A673 (cell line): ENCODE measurements at regions of chr3 and their contacts with region 1.

Region 1: DNA sequence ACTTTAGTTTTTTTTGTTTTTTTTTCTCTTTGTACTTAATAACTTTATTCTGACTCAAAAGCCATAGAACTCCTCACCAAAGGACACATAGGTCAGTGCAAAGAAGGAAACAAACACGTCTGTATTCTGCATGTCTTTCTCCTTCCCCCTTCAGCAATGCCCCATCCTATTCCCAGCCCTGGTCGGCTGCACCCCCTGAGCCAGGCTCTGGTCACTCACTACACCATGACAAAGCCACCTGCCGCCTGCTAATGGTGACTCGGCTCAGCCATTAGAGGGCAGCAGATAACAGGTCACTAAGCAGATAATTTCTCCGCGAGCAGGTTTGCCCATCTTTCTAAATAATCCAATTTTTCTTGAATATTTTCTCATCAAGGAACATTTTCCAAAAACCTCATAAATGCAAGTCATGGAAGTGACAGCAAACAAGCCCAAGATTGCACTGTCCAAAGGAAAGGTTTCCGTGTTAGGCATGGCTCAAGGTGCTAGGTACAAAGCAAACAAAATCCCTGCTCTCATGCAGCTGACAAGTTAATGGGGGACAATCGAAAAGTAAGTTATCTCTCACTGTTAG is 37.8 kb downstream of the TM4SF4 start:
- DNase-seq: peak; percentile 70
- H3K4me3 ChIP-seq: no peak overlapping the region
- H3K27ac ChIP-seq: no peak overlapping the region
- H3K4me1 ChIP-seq: peaks cover 6% of the 10 kb centered on the region
- H3K27me3 ChIP-seq: no peaks in the 10 kb centered on the region
- CTCF ChIP-seq: peak; percentile 90

Region 2: GRCh38 chr3:149216193-149216869 is 296.0 kb before region 1 on chr3:
- CTCF ChIA-PET with region 1: no interaction called
- POLR2A ChIA-PET with region 1: no interaction called
- intact Hi-C with region 1: no loop called
- DNase-seq: no peak
- H3K4me3 ChIP-seq: no peak overlapping the region
- H3K27ac ChIP-seq: no peak overlapping the region
- H3K4me1 ChIP-seq: no peaks in the 10 kb centered on the region
- H3K27me3 ChIP-seq: no peaks in the 10 kb centered on the region
- CTCF ChIP-seq: no peak

Region 3: DNA sequence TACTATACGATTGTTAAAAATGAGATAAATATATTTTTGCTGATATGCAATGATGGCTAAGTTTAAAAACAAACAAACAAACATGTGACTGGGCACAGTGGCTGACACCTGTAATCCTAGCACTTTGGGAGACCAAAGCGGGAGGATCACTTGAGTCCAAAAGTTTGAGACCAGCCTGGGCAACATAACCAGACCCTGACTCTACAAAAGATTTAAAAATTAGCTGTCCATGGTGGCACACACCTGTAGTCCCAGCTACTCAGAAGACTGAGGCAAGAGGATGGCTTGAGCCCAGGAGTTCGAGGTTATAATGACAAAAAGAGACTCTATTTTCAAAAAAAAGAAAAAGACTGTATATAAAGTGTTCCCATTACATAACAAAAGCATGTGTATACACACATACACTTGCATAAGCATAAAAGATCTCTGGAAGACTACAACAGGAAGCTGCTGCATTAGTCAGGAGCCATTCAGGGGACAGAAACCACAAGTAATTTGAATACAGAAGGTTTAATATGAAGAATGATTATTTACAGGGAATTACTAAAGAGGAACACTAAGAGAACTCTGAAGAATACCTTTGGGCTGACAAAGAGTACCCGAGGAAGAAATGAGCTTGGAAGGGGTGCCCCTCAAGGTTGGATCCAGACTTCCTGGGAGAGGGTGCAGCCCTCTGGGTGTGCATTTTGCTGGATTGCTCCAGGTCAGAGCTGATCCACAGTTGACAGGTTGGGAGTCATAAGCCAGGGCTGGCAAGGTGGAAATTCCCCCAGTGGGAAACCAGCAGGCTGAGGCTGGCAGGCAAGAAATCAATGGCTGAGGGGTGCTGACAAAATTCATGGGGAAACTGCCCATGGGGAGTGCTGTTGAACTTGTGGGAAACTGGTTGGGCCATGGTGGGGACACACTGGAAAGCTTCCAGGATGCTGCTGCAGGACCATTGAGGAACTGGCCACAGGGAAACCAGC is 169.6 kb before region 1 on chr3:
- CTCF ChIA-PET with region 1: no interaction called
- POLR2A ChIA-PET with region 1: no interaction called
- intact Hi-C with region 1: no loop called
- DNase-seq: peak; percentile 43
- H3K4me3 ChIP-seq: no peak overlapping the region
- H3K27ac ChIP-seq: no peak overlapping the region
- H3K4me1 ChIP-seq: peaks cover 8% of the 10 kb centered on the region
- H3K27me3 ChIP-seq: no peaks in the 10 kb centered on the region
- CTCF ChIP-seq: no peak

Region 4: GRCh38 chr3:149494022-149494758 is 18.1 kb before region 1 on chr3:
- CTCF ChIA-PET with region 1: no interaction called
- POLR2A ChIA-PET with region 1: no interaction called
- intact Hi-C with region 1: no loop called
- DNase-seq: peak; percentile 82
- H3K4me3 ChIP-seq: no peak overlapping the region
- H3K27ac ChIP-seq: no peak overlapping the region
- H3K4me1 ChIP-seq: no peaks in the 10 kb centered on the region
- H3K27me3 ChIP-seq: peaks cover 4% of the 10 kb centered on the region
- CTCF ChIP-seq: peak; percentile 92

Region 5: GRCh38 chr3:149717391-149718056 is 205.2 kb after region 1 on chr3:
- CTCF ChIA-PET with region 1: no interaction called
- POLR2A ChIA-PET with region 1: no interaction called
- intact Hi-C with region 1: loop called (anchors 1 kb)
- DNase-seq: peak; percentile 84
- H3K4me3 ChIP-seq: no peak overlapping the region
- H3K27ac ChIP-seq: no peak overlapping the region
- H3K4me1 ChIP-seq: peaks cover 6% of the 10 kb centered on the region
- H3K27me3 ChIP-seq: no peaks in the 10 kb centered on the region
- CTCF ChIP-seq: peak; percentile 85

Region 6: DNA sequence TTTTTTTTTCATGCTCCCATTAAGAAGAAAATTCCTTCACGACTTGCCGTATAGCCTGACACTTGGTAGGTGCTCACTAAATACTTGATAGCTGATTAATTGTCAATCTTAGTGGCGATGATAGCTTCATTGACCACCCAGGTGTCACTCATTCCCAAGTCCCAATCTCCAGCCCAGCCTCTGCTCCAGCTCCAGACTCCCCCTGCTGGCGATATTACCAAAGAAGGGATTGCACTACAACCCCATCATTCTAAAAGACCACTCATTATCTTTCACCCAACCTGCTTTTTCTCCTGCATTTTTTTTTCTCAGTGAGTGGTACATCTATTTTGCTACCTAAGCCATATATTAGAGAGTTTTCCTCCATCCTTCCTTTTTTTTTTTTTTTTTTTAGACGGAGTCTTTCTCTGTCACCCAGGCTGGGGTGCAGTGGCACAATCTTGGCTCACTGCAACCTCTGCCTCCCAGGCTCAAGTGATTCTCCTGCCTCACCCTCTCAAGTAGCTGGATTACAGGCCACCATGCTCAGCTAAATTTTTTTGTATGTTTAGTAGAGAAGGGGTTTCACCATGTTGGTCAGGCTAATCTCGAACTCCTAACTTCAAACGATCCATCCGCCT is 259.5 kb after region 1 on chr3:
- CTCF ChIA-PET with region 1: interaction called, 3 read pairs
- POLR2A ChIA-PET with region 1: no interaction called
- intact Hi-C with region 1: loop called (anchors 1 kb)
- DNase-seq: peak; percentile 63
- H3K4me3 ChIP-seq: no peak overlapping the region
- H3K27ac ChIP-seq: no peak overlapping the region
- H3K4me1 ChIP-seq: no peaks in the 10 kb centered on the region
- H3K27me3 ChIP-seq: no peaks in the 10 kb centered on the region
- CTCF ChIP-seq: peak; percentile 90

Region 7: GRCh38 chr3:149783576-149783975 is 271.3 kb after region 1 on chr3:
- CTCF ChIA-PET with region 1: no interaction called
- POLR2A ChIA-PET with region 1: interaction called, 10 read pairs
- intact Hi-C with region 1: no loop called
- DNase-seq: no peak
- H3K4me3 ChIP-seq: no peak overlapping the region
- H3K27ac ChIP-seq: no peak overlapping the region
- H3K4me1 ChIP-seq: no peaks in the 10 kb centered on the region
- H3K27me3 ChIP-seq: no peaks in the 10 kb centered on the region
- CTCF ChIP-seq: no peak